Dorsolateral prefrontal cortex (tissue), 120 donors: ENCODE measurements at regions of chr3 and their contacts with region 1.

Region 1: GRCh38 chr3:42539869-42540714 is 37.6 kb downstream of the VIPR1 start:
- DNase-seq: peak in 2 of 10 donors; percentile 32 to 33
- H3K4me3 ChIP-seq: no peak overlapping the region
- H3K27ac ChIP-seq: no peak overlapping the region
- H3K27me3 ChIP-seq: no peaks in the 10 kb centered on the region
- CTCF ChIP-seq: peak; percentile 50 to 87 (median 72)

Region 2: GRCh38 chr3:42502429-42503250 is 37.5 kb before region 1 on chr3 and contains the start of gene VIPR1:
- intact Hi-C with region 1: loop called (anchors 2 to 5 kb)
- DNase-seq: peak; percentile 67 to 97 (median 87)
- H3K4me3 ChIP-seq: peak within 1 kb of the TSS; percentile 45 to 80 (median 61)
- H3K27ac ChIP-seq: peak within 1 kb of the TSS in 49 of 59 donors; percentile 18 to 83 (median 63)
- H3K27me3 ChIP-seq: peaks cover 0 to 9% (median 0%) of the 10 kb centered on the region in 45 donors
- CTCF ChIP-seq: peak in 9 of 56 donors; percentile 7 to 31 (median 11)
- total RNA-seq, gene VIPR1: 15.9 to 69.4 (median 40.2) TPM